Activated CD8-positive, alpha-beta T cell treated with anti-CD3 and anti-CD28 coated beads, Interleukin-2, amount 10 ng/mL, durations not matched to agents 7 days and 5 days (primary cell): ENCODE measurements at regions of chr3 and their contacts with region 1.

Region 1: DNA sequence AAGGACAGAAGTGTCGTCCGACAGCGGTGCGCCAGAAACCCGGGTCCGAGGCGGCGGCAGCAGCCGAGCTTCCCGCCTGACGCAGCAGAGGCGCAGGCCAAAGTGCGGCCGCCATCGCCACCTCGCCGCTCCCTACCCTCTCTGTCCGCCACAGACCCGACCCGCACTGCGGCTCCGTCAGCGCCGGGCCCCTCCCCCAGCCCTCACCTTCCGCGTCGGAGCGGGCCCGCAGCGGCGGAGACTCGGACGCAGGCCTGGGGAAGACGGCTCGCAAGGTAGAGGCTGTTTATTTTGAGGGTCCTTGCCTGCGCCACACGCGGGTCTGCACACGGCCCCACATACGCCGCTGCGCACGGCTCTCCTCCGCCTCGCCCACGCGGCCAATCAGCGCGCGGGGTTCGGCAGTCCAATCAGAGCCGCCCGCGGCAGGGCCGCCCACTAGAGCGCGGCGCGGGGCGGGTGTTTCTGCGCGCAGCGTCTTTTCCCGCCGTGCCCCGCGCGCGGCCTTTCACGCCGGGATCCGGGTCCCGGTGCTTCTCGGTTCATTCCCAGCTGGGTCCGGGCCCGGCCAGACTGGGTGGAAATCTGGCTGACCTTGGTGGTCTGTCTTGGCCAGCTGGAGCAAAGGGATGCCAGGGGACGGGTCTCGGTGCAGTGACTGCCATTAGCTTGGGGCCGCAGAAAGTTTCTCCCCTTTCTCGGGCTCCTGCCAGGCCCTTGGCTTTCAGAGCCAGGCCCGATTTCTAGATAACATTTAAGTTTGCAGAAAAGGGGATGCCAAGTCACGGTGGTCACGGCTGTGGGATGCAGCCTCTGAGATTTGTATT is at the start of gene CNBP:
- DNase-seq: peak; percentile 94
- ATAC-seq: peak; percentile 98
- H3K4me3 Mint-ChIP-seq: peak within 1 kb of the TSS; percentile 92
- H3K27ac Mint-ChIP-seq: peak within 1 kb of the TSS; percentile 98
- H3K4me1 Mint-ChIP-seq: peaks cover 45% of the 10 kb centered on the region
- H3K27me3 Mint-ChIP-seq: no peaks in the 10 kb centered on the region
- total RNA-seq, gene CNBP: 263 to 273 TPM

Region 2: GRCh38 chr3:129128357-129129155 is 55.2 kb before region 1 on chr3:
- CTCF ChIA-PET with region 1: no interaction called
- POLR2A ChIA-PET with region 1: no interaction called
- DNase-seq: no peak
- ATAC-seq: no peak
- H3K4me3 Mint-ChIP-seq: no peak overlapping the region
- H3K27ac Mint-ChIP-seq: peak overlapping the region; percentile 19
- H3K4me1 Mint-ChIP-seq: peaks cover 14% of the 10 kb centered on the region
- H3K27me3 Mint-ChIP-seq: no peaks in the 10 kb centered on the region

Region 3: GRCh38 chr3:129160891-129161859 is 22.6 kb before region 1 on chr3 and contains the start of gene ISY1:
- CTCF ChIA-PET with region 1: interaction called, 18 read pairs
- POLR2A ChIA-PET with region 1: interaction called, 18 read pairs
- DNase-seq: peak; percentile 93
- ATAC-seq: peak; percentile 84
- H3K4me3 Mint-ChIP-seq: peak within 1 kb of the TSS; percentile 91
- H3K27ac Mint-ChIP-seq: peak within 1 kb of the TSS; percentile 99
- H3K4me1 Mint-ChIP-seq: peaks cover 36% of the 10 kb centered on the region
- H3K27me3 Mint-ChIP-seq: no peaks in the 10 kb centered on the region
- total RNA-seq, gene ISY1: 57.9 to 65.7 TPM

Region 4: DNA sequence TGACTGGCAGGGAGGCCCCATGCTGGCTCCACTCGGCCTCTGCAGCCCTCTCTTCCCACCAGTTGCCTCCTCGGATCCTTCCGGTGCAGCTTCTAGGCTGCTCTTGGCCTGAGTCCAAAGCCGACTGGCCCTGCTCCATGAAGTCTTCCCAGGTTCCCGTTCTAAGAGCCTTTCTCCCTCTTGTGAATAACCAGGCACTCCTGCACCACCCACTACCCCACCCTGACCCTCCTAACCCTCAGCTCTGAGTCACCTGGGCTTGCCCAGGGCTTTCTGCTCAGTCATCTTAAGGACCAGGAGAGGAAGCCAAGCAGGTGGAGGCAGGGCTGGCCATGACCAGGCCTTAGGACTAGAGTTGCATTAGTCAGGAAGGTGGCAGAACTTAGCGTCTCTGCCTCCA is 28.0 kb after region 1 on chr3:
- CTCF ChIA-PET with region 1: no interaction called
- POLR2A ChIA-PET with region 1: no interaction called
- DNase-seq: no peak
- ATAC-seq: no peak
- H3K4me3 Mint-ChIP-seq: no peak overlapping the region
- H3K27ac Mint-ChIP-seq: no peak overlapping the region
- H3K4me1 Mint-ChIP-seq: no peaks in the 10 kb centered on the region
- H3K27me3 Mint-ChIP-seq: peaks cover 8% of the 10 kb centered on the region

Region 5: DNA sequence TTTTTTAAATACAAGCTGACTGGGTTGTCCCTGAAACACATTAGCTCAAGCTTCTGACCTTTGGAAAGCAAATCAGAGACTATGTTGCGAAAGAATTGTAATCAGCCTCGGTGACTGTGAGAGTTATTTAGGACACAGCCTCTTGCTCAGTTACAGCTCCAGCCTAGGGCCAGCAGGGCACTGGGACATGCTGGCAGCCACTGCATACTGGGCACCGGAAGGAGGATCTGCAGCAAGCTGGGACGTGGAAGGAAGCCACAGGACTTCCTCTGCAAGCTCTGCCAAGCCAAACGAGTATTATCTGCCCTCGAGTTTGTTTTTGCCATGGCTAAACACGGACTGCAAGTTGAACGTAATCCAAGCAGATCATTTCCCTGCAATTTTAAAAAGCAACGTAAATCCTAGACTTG is 41.2 kb after region 1 on chr3:
- CTCF ChIA-PET with region 1: interaction called, 10 read pairs
- POLR2A ChIA-PET with region 1: interaction called, 10 read pairs
- DNase-seq: peak; percentile 48
- ATAC-seq: peak; percentile 77
- H3K4me3 Mint-ChIP-seq: peak overlapping the region; percentile 57
- H3K27ac Mint-ChIP-seq: peak overlapping the region; percentile 86
- H3K4me1 Mint-ChIP-seq: peaks cover 47% of the 10 kb centered on the region
- H3K27me3 Mint-ChIP-seq: no peaks in the 10 kb centered on the region

Region 6: DNA sequence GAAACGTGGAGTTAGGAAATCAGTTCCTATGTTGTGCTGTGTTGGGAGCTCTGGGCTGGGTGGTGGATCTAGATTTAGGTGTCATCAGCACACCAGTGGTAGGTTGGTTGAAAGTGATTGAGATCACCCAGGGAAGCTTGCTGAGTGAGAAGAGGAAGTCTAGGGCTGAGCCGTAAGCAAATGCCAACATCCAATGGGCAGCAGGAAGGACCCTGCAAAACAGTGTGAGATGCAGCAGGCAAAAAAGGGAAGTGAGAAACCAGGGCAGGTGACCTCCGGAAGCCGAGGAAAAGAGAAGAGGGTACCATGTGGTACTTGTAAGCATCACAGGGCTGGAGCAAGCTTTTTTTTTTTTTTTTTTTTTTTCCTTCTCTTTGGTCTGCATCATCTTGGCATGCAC is 49.8 kb after region 1 on chr3:
- CTCF ChIA-PET with region 1: interaction called, 7 read pairs
- POLR2A ChIA-PET with region 1: interaction called, 36 read pairs
- DNase-seq: peak; percentile 31
- ATAC-seq: peak; percentile 38
- H3K4me3 Mint-ChIP-seq: peak overlapping the region; percentile 6
- H3K27ac Mint-ChIP-seq: peak overlapping the region; percentile 89
- H3K4me1 Mint-ChIP-seq: peaks cover 75% of the 10 kb centered on the region
- H3K27me3 Mint-ChIP-seq: no peaks in the 10 kb centered on the region

Region 7: DNA sequence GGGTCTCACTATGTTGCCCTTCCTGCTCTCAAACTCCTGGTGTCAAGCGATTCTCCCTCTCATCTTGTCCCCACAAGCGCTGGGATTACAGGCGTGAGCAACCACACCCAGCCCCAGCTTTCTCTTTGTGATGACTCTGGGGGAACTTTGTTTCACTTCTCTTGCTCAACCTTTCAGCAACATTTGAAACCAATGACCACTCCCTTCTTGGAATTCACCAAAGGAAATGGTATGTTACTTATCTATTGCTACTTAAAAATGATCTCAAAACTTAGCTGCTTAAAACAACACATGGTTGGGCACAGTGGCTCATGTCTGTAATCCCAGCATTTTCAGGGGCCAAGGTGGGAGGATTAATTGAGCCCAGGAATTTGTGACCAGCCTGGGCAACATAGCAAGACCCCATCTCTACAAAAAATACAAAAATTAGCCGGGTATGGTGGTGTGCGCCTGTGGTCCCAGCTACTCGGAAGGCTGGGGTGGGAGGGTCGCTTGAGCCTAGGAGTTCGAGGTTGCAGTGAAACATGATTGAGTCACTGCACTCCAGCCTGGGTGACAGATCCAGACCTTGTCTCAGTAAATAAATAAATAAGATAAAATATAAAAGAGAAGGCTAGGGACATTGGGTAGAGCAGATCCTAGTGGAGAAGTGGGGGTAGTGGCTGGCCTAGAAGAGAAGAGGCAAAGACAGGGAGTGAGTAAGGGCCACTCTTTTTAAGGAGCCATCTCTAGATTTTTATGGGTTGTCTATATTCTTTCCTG is 55.3 kb after region 1 on chr3:
- CTCF ChIA-PET with region 1: interaction called, 7 read pairs
- POLR2A ChIA-PET with region 1: interaction called, 36 read pairs
- DNase-seq: peak; percentile 70
- ATAC-seq: peak; percentile 80
- H3K4me3 Mint-ChIP-seq: peak overlapping the region; percentile 69
- H3K27ac Mint-ChIP-seq: peak overlapping the region; percentile 93
- H3K4me1 Mint-ChIP-seq: peaks cover 53% of the 10 kb centered on the region
- H3K27me3 Mint-ChIP-seq: no peaks in the 10 kb centered on the region

Region 8: GRCh38 chr3:129413687-129414506 is 230.1 kb after region 1 on chr3:
- CTCF ChIA-PET with region 1: no interaction called
- POLR2A ChIA-PET with region 1: no interaction called
- DNase-seq: no peak
- ATAC-seq: no peak
- H3K4me3 Mint-ChIP-seq: no peak overlapping the region
- H3K27ac Mint-ChIP-seq: no peak overlapping the region
- H3K4me1 Mint-ChIP-seq: no peaks in the 10 kb centered on the region
- H3K27me3 Mint-ChIP-seq: peaks cover 9% of the 10 kb centered on the region